Activated CD4-positive, alpha-beta T cell treated with anti-CD3 and anti-CD28 coated beads for 36 hours (primary cell): ENCODE measurements at regions of chrX and their contacts with region 1.

Region 1: GRCh38 chrX:49269010-49269767 is 404 bp upstream of the PPP1R3F start:
- DNase-seq: peak; percentile 97
- ATAC-seq: peak; percentile 80
- H3K4me3 Mint-ChIP-seq: peak overlapping the region; percentile 78
- H3K27ac Mint-ChIP-seq: peak overlapping the region; percentile 98
- H3K4me1 Mint-ChIP-seq: peaks cover 50% of the 10 kb centered on the region
- H3K27me3 Mint-ChIP-seq: no peaks in the 10 kb centered on the region

Region 2: DNA sequence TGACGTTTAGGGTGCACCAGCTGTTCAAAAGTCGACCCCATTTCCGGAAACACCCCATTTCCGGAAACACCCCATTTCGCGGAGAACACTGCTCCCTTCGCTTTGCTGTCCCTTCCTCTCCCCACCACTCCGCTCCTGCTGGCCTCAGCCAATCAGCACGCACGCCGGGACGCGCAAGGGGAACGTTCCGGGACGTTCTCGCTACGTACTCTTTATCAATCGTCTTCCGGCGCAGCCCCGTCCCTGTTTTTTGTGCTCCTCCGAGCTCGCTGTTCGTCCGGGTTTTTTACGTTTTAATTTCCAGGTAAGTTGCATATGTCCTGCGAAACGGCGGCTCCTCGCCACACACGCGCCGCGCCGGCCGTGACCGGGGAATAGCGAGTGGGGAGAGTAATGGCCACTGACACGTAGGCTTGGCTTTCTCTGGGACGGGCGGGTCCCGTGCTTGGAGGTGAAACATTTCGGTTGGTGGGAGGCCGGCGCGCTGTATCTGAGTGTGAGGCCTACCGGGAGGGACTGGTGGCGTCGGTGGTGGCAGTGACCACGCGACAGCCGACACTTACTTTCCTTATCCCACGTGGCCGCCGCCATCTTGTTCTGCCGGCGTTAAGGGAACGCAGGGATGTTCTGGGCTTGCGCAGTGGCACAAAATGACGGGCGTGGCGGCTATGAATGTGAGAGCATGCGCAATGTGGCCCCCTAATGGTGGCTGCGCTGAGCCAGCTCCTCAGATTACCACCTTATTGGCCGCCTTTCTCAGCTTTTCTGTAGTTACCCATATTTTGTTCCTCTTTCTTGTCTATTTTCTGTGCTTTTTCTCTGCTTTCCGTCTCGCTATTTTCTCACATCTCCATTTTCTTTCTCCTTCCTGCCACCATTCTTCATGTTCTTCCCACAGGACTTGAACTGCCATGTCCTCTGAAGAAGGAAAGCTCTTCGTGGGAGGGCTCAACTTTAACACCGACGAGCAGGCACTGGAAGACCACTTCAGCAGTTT is 694.6 kb before region 1 on chrX and contains the start of gene RBM3:
- CTCF ChIA-PET with region 1: no interaction called
- POLR2A ChIA-PET with region 1: no interaction called
- intact Hi-C with region 1: loop called in 1 of 2 experiments (anchors 1 kb)
- DNase-seq: peak; percentile 95
- ATAC-seq: peak; percentile 91
- H3K4me3 Mint-ChIP-seq: peak within 1 kb of the TSS; percentile 99
- H3K27ac Mint-ChIP-seq: peak within 1 kb of the TSS; percentile 100
- H3K4me1 Mint-ChIP-seq: peaks cover 25% of the 10 kb centered on the region
- H3K27me3 Mint-ChIP-seq: no peaks in the 10 kb centered on the region
- total RNA-seq, gene RBM3: 164 to 202 TPM

Region 3: GRCh38 chrX:48715072-48715471 is 554.1 kb before region 1 on chrX:
- CTCF ChIA-PET with region 1: no interaction called
- POLR2A ChIA-PET with region 1: no interaction called
- intact Hi-C with region 1: no loop called
- DNase-seq: no peak
- ATAC-seq: peak; percentile 43
- H3K4me3 Mint-ChIP-seq: no peak overlapping the region
- H3K27ac Mint-ChIP-seq: peak overlapping the region; percentile 86
- H3K4me1 Mint-ChIP-seq: peaks cover 78% of the 10 kb centered on the region
- H3K27me3 Mint-ChIP-seq: no peaks in the 10 kb centered on the region

Region 4: DNA sequence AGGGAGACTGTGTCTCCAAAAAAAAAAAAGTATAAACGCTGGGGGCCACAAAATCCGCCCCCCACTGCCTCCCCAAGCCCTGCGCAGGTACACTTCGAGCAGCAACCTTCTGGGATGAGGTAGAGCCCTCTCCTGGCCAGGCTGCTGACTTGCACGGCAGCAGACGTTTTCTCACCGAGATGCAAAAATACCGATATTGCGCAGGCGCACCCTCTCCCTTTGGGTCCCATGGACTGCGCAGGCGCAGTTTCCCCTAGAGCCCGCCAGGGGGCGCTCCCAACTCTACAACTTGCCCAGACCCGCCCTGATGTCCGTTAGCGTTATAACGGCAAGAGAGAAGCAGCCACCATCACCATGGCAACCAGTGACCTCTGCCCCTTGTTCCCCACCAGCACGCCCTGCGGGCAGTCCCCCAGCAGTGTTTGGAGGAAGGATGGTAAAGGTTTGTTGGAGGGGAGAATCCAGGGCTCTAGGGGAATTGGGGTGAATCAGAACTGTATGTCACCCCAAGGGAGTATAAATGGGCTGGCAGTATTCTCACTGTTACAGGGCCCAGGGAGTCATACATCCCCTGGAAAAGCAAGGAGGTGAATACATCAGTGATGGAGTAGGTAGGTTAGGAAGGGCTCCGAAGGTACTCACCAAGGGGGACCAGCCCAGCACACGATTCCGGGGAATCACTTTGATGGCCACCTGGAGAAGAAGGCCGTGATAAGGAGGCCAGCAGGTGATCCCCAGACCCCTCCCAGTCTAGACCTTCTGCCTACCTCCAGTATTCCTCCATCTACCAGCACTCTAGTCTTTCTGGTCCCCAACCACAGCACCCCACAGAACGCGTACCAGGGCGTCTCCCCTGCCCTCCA is 351.8 kb before region 1 on chrX:
- CTCF ChIA-PET with region 1: no interaction called
- POLR2A ChIA-PET with region 1: no interaction called
- intact Hi-C with region 1: loop called in 1 of 2 experiments (anchors 5 kb)
- DNase-seq: peak; percentile 92
- ATAC-seq: peak; percentile 34
- H3K4me3 Mint-ChIP-seq: peak overlapping the region; percentile 97
- H3K27ac Mint-ChIP-seq: peak overlapping the region; percentile 95
- H3K4me1 Mint-ChIP-seq: peaks cover 51% of the 10 kb centered on the region
- H3K27me3 Mint-ChIP-seq: no peaks in the 10 kb centered on the region

Region 5: DNA sequence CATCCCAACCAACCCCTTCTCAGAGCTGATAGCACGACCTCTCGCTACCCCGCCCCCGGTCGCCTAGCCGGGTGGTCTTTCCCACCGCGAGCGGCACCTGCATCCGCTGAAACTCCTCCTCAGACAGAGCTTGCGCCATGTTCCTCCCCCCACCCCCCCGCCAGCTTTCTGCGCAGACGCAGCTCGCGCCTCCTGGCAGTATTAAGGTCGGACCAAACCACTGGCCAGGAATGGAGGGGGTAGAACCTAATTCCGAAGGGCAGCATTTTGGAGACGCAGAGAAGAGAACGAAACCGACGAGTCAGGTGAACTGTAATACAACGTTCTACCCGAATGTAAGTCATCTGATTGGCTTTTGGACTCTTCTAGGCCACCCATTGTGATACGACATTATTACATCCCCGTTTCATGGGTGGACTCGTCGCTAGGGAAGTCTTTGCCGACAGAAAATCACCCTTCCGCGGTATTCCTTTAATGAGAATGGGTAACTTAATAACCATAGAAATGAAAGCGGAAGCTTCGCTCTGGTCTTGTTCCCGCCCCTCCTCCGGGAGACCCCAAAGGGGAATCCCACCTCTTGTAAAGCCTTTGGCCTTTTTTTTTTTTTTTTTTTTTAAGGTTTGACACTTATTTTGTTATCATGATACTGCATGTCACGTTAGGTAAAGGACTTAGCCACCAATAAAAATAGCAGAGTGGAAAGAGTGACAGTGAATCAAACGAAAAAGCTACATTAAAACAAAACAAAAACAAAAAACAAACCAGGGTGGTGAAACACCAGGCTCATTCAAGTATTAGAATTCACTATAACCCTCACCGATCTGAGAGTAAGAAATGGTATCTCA is 266.9 kb before region 1 on chrX and contains the start of gene GRIPAP1:
- CTCF ChIA-PET with region 1: no interaction called
- POLR2A ChIA-PET with region 1: no interaction called
- intact Hi-C with region 1: loop called in 1 of 2 experiments (anchors 2 kb)
- DNase-seq: peak; percentile 87
- ATAC-seq: peak; percentile 82
- H3K4me3 Mint-ChIP-seq: peak within 1 kb of the TSS; percentile 97
- H3K27ac Mint-ChIP-seq: peak within 1 kb of the TSS; percentile 98
- H3K4me1 Mint-ChIP-seq: peaks cover 34% of the 10 kb centered on the region
- H3K27me3 Mint-ChIP-seq: no peaks in the 10 kb centered on the region
- total RNA-seq, gene GRIPAP1: 57.8 to 63.3 TPM

Region 6: DNA sequence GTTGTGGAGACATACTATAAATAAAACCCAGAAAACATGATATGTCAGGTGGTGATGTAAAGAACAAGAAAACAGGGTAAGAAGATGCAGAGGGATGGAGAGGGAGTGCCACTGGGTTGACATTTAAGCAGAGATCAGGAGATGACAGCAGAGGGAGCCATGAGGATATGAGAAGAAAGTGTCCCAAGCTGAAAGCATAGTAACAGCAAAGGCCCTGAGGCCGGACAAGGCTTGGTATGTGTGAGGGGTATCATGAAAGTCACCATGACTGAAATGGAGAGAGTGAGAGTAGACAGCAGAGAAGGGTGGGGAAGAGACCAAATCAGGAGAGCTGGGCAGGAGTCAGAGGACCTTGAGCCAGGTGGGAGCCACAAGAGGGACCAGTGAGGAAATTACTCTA is 149.1 kb before region 1 on chrX:
- CTCF ChIA-PET with region 1: no interaction called
- POLR2A ChIA-PET with region 1: no interaction called
- intact Hi-C with region 1: loop called in 1 of 2 experiments (anchors 1 kb)
- DNase-seq: no peak
- ATAC-seq: no peak
- H3K4me3 Mint-ChIP-seq: no peak overlapping the region
- H3K27ac Mint-ChIP-seq: peak overlapping the region; percentile 56
- H3K4me1 Mint-ChIP-seq: peaks cover 20% of the 10 kb centered on the region
- H3K27me3 Mint-ChIP-seq: no peaks in the 10 kb centered on the region

Region 7: GRCh38 chrX:49199906-49200771 is 69.0 kb before region 1 on chrX and contains the start of gene SYP:
- CTCF ChIA-PET with region 1: no interaction called
- POLR2A ChIA-PET with region 1: no interaction called
- intact Hi-C with region 1: loop called in 1 of 2 experiments (anchors 1 kb)
- DNase-seq: peak; percentile 94
- ATAC-seq: peak; percentile 95
- H3K4me3 Mint-ChIP-seq: peak within 1 kb of the TSS; percentile 60
- H3K27ac Mint-ChIP-seq: peak within 1 kb of the TSS; percentile 69
- H3K4me1 Mint-ChIP-seq: peaks cover 19% of the 10 kb centered on the region
- H3K27me3 Mint-ChIP-seq: no peaks in the 10 kb centered on the region
- total RNA-seq, gene SYP: 7.2 to 8.5 TPM